ENCODE measurements at regions of chr1 and their contacts with region 1.

Region 1: DNA sequence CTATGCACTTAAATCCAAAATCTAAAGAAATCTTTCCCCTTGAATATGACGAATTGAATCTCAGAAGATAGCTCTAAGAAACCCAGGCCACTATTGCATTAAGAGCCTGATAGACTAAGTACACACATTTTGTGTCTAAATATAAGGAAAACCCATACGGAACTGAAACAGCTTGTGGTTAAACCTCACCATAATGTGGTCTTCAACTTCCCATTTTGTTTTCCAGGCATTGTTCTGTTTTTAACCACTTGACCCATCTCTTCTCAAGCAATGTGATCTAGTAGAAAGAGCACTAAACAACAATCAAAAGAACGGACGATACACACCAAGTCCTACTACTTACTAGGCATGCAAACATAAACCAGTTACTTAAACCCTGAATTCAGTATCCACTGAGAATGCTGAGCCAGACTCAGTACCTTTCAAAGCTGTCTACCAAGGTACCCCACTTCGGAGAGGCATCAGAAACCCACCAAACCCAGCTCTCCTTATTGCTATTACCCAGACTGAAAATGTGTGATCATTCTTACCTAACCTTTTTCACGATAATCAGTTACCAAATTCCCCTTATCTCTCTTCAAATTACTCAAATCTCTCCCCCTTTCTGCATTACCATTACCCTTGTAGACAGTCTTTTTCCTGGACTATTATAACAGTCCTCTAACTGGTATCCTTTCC is 12.8 kb downstream of the OTUD7B start:
- DNase-seq: peak; percentile 29
- H3K4me3 Mint-ChIP-seq: no peak overlapping the region
- H3K27ac Mint-ChIP-seq: peak overlapping the region; percentile 29
- H3K4me1 Mint-ChIP-seq: peaks cover 58% of the 10 kb centered on the region
- H3K27me3 Mint-ChIP-seq: no peaks in the 10 kb centered on the region

Region 2: DNA sequence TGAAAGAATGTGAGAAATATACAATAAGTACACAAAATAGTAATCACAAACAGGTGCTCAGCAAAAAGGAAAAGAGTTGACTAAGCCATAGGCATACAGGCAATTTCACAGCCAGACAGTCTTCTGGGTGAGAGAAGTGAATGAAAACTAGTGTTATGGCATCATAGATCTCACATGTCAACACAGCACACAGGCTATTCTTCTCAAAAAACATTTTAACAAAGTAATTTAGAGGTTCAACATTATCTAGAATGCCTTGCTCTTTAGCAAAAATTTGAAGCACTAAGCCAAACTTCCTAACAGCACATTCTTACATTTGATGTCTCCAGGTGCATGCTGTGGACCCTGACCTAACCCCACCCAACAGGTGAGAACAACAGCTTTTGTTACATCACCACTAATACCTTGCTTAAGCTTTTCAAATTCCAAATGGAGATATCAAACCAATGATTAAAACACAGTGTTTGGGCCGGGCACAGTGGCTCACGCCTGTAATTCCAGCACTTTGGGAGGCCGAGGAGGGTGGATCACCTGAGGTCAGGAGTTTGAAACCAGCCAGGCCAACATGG is 17.7 kb before region 1 on chr1:
- CTCF ChIA-PET with region 1: no interaction called
- POLR2A ChIA-PET with region 1: interaction called, 4 read pairs
- intact Hi-C with region 1: loop called (anchors 2 kb)
- DNase-seq: no peak
- H3K4me3 Mint-ChIP-seq: no peak overlapping the region
- H3K27ac Mint-ChIP-seq: no peak overlapping the region
- H3K4me1 Mint-ChIP-seq: peaks cover 19% of the 10 kb centered on the region
- H3K27me3 Mint-ChIP-seq: no peaks in the 10 kb centered on the region

Region 3: DNA sequence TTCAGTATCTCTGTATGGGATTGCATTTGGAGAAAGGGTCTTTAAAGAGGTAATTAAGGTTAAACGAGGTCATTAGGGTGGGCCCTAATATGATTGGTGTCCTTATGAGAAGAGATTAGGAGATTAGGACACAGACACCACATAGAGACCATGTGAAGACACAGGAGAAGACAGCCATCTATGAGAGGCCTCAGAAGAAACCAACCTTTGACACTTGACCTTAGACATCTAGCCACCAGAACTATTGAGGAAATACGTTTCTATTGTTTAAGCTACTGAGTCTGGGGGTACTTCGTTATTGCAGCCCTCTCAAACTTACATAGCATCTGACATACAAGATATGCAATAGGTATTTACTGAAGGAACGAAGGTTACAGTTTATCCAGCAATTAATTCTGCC is 62.5 kb after region 1 on chr1:
- CTCF ChIA-PET with region 1: no interaction called
- POLR2A ChIA-PET with region 1: no interaction called
- intact Hi-C with region 1: no loop called
- DNase-seq: no peak
- H3K4me3 Mint-ChIP-seq: no peak overlapping the region
- H3K27ac Mint-ChIP-seq: no peak overlapping the region
- H3K4me1 Mint-ChIP-seq: peaks cover 2% of the 10 kb centered on the region
- H3K27me3 Mint-ChIP-seq: no peaks in the 10 kb centered on the region

Measured in activated CD4-positive, alpha-beta memory T cell treated with anti-CD3 and anti-CD28 coated beads for 36 hours (primary cell).